ENCODE measurements at regions of chr19 and their contacts with region 1.

Region 1: DNA sequence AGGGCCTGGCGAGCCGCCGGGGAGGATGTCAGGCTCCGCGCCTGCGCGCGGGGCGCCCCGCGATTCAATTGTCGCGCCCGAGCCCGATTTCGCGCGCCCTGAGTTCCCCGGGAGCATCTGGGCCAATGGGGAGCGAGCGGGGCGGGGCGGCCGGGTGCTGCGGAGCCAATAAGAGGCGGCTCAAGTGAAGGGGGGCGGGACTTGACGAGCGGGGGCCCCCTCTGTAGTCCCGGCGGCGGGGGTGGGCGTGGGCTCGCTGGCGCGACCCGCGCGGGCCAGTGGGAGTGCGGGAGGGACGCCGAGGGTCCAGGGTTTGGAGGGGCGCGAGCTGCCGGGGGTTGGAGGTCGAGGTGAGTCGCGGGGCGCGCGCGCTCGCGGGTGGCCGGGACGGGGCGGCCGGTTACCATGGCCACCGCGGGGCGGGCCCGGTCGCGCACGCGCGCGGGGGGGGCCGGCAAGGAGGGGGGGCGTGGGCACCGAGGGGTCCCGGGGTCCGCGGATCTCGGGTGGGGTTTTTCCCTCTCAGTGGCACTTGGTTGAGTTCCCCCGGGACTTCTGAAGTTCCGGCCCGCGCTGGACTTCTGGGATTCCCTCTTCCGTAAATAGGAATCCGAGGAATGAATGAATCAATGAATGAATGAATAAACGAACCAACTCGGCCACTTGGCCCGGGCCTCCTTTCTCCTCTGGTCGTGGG is 744 bp downstream of the UHRF1 start:
- DNase-seq: peak; percentile 90 to 95 (median 92)
- H3K4me3 ChIP-seq: peak overlapping the region; percentile 73
- H3K4me3 Mint-ChIP-seq: peak overlapping the region; percentile 88 to 100 (median 99)
- H3K27ac ChIP-seq: no peak overlapping the region
- H3K27ac Mint-ChIP-seq: peak overlapping the region in 7 of 8 donors; percentile 32 to 96 (median 84)
- H3K4me1 ChIP-seq: peaks cover 61% of the 10 kb centered on the region
- H3K4me1 Mint-ChIP-seq: peaks cover 52 to 77% (median 55%) of the 10 kb centered on the region in 3 donors
- H3K27me3 ChIP-seq: no peaks in the 10 kb centered on the region
- H3K27me3 Mint-ChIP-seq: peaks cover 0 to 4% of the 10 kb centered on the region in 2 donors

Region 2: DNA sequence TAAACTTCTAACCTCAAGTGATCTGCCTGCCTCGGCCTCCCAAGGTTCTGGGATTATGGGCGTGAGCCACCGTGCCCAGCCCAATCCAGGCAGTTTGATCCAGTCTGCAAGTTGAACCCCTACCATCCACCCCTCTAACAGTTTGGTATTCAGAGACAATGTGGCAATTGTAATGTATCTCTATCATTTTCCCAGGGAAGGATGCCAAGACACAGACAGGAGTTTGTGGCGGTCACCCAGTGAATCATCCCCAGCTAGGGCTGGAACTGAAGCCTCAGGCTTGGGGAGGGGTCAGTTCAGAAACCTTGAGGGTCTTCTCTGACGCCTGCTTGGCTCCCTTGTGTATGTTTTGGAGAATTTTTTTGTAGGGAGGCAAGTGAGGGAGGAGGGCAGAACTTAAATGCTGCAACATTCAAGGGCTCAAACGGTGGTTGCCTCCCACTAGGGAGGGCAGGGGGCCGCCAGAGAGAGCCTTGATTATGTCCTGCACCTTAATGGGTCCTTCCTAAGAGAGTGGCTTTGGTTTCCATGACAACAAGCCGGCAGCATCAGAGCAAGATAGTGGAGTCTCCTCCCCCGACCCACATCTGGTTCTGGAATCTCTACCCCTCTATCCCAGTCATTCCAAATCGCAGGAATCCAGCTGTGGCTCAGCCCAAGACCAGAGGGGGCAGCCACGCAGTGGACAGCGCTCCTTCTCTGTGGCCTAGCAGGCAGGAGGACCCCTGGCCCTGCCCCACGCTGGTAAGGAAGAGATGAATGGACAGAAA is 133.4 kb before region 1 on chr19:
- CTCF ChIA-PET with region 1: no interaction called
- POLR2A ChIA-PET with region 1: no interaction called
- DNase-seq: no peak
- H3K4me3 ChIP-seq: no peak overlapping the region
- H3K4me3 Mint-ChIP-seq: no peak overlapping the region
- H3K27ac ChIP-seq: no peak overlapping the region
- H3K27ac Mint-ChIP-seq: no peak overlapping the region
- H3K4me1 ChIP-seq: no peaks in the 10 kb centered on the region
- H3K4me1 Mint-ChIP-seq: no peaks in the 10 kb centered on the region
- H3K27me3 ChIP-seq: no peaks in the 10 kb centered on the region
- H3K27me3 Mint-ChIP-seq: peaks cover 26 to 38% of the 10 kb centered on the region in 2 donors

Region 3: DNA sequence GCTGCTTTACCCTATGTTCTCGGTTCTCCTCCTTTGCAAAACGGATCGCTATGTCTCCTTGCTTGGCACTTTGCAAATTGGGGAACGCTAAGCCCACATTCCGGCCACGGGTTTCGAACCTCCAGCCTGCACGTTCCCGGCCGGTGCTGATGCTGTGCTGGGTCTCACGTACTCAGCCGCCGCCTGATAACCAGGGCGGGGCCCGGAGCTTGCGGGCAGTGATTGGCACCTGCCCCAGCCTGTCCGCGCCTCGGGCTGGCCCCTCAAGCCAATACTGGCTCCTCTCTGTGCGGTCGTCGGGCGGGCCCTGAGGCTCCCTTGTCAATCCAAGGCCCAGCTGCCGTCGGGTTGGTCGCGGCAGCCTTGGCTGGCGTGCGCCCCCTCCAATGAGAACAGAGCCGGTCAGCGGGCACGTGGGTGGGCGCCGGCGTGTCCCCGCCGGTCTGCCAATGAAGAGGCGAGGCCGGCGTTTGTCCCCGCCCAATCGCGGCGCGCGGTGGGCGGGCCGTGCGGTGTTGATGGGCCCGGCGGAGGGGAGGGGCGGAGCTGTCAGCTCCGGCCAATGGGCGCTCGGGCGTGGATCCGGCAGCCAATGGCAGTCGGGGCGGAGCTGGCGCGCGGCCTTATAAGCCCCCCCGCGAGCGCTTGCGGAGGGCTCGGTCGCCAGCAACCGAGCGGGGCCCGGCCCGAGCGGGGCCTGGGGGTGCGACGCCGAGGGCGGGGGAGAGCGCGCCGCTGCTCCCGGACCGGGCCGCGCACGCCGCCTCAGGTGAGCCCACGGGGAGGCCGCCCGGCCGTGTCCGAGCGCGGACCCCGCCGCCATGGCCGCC is 58.6 kb after region 1 on chr19 and contains the start of gene KDM4B:
- CTCF ChIA-PET with region 1: interaction called, 52 read pairs
- POLR2A ChIA-PET with region 1: interaction called, 128 read pairs
- DNase-seq: peak; percentile 97 to 100 (median 99)
- H3K4me3 ChIP-seq: peak within 1 kb of the TSS; percentile 49
- H3K4me3 Mint-ChIP-seq: peak within 1 kb of the TSS; percentile 83 to 95 (median 89)
- H3K27ac ChIP-seq: peak within 1 kb of the TSS; percentile 33
- H3K27ac Mint-ChIP-seq: peak within 1 kb of the TSS; percentile 78 to 98 (median 92)
- H3K4me1 ChIP-seq: peaks cover 27% of the 10 kb centered on the region
- H3K4me1 Mint-ChIP-seq: peaks cover 29 to 46% (median 32%) of the 10 kb centered on the region in 3 donors
- H3K27me3 ChIP-seq: no peaks in the 10 kb centered on the region
- H3K27me3 Mint-ChIP-seq: peaks cover 0 to 4% of the 10 kb centered on the region in 2 donors
- total RNA-seq, gene KDM4B: 14.6 to 16.0 TPM

Region 4: GRCh38 chr19:5018224-5019015 is 108.4 kb after region 1 on chr19:
- CTCF ChIA-PET with region 1: no interaction called
- POLR2A ChIA-PET with region 1: no interaction called
- DNase-seq: no peak
- H3K4me3 ChIP-seq: no peak overlapping the region
- H3K4me3 Mint-ChIP-seq: no peak overlapping the region
- H3K27ac ChIP-seq: no peak overlapping the region
- H3K27ac Mint-ChIP-seq: peak overlapping the region in 2 of 8 donors; percentile 29 to 61
- H3K4me1 ChIP-seq: no peaks in the 10 kb centered on the region
- H3K4me1 Mint-ChIP-seq: peaks cover 4 to 9% (median 4%) of the 10 kb centered on the region in 3 donors
- H3K27me3 ChIP-seq: no peaks in the 10 kb centered on the region
- H3K27me3 Mint-ChIP-seq: no peaks in the 10 kb centered on the region

Region 5: DNA sequence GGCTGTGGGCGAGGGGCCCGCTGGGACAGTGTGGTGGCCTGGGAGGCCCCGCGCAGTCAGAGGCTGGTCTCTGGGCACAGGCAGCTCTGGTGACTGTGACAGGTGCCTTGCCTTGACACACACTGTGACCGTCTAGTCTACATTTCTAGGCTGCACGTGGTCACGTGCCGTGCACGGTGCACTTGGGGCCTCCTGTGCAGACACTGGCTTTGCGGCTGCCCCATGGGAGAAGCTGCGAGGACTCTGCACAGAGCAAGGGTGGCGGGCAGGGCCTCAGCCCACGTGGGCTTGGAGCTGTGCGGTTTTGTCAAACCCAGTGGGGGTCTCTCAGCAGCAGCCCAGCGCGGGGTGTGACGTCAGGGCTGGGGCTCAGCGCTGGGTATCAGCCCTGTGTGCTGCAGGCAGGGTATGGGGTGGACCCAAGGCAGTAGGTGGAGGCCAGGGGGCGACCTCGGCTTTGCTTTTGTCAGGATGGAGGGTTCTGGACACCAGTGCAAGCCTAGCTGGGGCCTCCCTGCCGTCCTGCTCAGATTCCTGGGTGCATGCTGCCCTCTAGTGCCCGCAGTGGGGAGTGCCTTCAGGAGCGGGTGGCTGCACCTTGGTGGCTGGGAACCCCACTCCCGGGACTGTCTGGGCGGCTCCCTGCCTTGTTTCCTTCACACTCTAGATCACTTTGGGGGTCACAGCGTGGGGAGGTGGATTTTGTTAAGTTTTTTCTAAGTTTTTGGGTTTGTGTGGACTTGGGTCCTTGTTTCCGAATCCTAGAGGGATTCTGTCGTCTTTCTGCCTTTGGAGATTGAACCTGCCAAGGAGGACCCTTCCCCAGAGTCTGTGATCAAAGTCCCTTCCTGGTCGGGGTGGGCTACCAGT is 121.4 kb after region 1 on chr19:
- CTCF ChIA-PET with region 1: interaction called, 47 read pairs
- POLR2A ChIA-PET with region 1: no interaction called
- DNase-seq: peak; percentile 64 to 83 (median 74)
- H3K4me3 ChIP-seq: no peak overlapping the region
- H3K4me3 Mint-ChIP-seq: no peak overlapping the region
- H3K27ac ChIP-seq: no peak overlapping the region
- H3K27ac Mint-ChIP-seq: peak overlapping the region in 2 of 8 donors; percentile 14 to 61
- H3K4me1 ChIP-seq: no peaks in the 10 kb centered on the region
- H3K4me1 Mint-ChIP-seq: peaks cover 9 to 21% (median 13%) of the 10 kb centered on the region in 3 donors
- H3K27me3 ChIP-seq: no peaks in the 10 kb centered on the region
- H3K27me3 Mint-ChIP-seq: no peaks in the 10 kb centered on the region

Measured in CD8-positive, alpha-beta memory T cell (primary cell).